Activated CD4-positive, alpha-beta T cell treated with anti-CD3 and anti-CD28 coated beads, Interleukin-2, amount 10 ng/mL, durations not matched to agents 24 days and 14 days (primary cell): ENCODE measurements at regions of chr22 and their contacts with region 1.

Region 1: GRCh38 chr22:22818861-22819855 is 68.5 kb upstream of the IGLL5 start:
- DNase-seq: peak; percentile 89
- H3K4me3 Mint-ChIP-seq: peak overlapping the region; percentile 77
- H3K27ac Mint-ChIP-seq: peak overlapping the region; percentile 86
- H3K4me1 Mint-ChIP-seq: peaks cover 85% of the 10 kb centered on the region
- H3K27me3 Mint-ChIP-seq: no peaks in the 10 kb centered on the region

Region 2: GRCh38 chr22:22009661-22010060 is 809.5 kb before region 1 on chr22:
- intact Hi-C with region 1: no loop called
- DNase-seq: no peak
- H3K4me3 Mint-ChIP-seq: no peak overlapping the region
- H3K27ac Mint-ChIP-seq: no peak overlapping the region
- H3K4me1 Mint-ChIP-seq: no peaks in the 10 kb centered on the region
- H3K27me3 Mint-ChIP-seq: peaks cover 15% of the 10 kb centered on the region

Region 3: GRCh38 chr22:22865311-22866072 is 46.3 kb after region 1 on chr22:
- intact Hi-C with region 1: loop called (anchors 5 kb)
- DNase-seq: peak; percentile 81
- H3K4me3 Mint-ChIP-seq: no peak overlapping the region
- H3K27ac Mint-ChIP-seq: peak overlapping the region; percentile 77
- H3K4me1 Mint-ChIP-seq: peaks cover 30% of the 10 kb centered on the region
- H3K27me3 Mint-ChIP-seq: peaks cover 50% of the 10 kb centered on the region

Region 4: GRCh38 chr22:23088199-23088604 is 269.0 kb after region 1 on chr22:
- intact Hi-C with region 1: no loop called
- DNase-seq: no peak
- H3K4me3 Mint-ChIP-seq: no peak overlapping the region
- H3K27ac Mint-ChIP-seq: no peak overlapping the region
- H3K4me1 Mint-ChIP-seq: no peaks in the 10 kb centered on the region
- H3K27me3 Mint-ChIP-seq: peaks cover 2% of the 10 kb centered on the region